ENCODE measurements at regions of chr6 and their contacts with region 1.

Region 1: DNA sequence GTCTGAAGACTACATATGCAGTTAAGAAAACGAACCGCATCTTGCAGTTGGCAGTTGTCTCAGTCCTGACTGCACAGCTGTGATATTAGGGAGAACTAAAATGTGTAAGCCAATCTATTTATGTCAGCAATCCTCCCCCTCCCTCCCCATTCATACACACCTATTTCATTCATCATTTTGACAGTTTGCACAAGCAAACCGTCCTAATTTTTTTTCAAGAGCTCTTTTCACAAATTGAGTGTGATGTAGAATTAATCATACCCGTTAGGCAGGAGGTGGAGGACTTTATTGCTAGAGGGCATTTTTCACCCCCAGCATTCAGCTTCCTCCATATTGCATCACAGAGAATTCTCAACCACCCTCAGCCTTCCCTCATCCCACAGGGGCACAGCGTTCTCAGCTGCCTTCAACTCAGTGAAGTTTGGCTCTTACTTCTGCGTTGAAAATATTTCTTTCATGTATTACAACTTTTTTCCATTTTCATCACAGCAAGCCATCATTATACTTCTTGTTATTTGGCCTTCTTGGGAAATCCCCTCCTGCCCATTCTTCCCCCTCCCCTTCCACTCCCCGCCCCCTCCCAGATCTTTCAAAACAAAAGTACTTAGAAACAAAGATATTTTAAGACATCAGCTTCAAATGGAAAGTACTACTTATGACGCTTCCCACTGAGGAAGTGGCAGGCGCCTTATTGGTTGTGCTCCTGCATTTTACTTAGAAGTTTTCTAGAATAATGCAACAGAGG is 37.5 kb downstream of the NOX3 start:
- DNase-seq: peak; percentile 40
- H3K4me3 Mint-ChIP-seq: peak overlapping the region; percentile 61
- H3K27ac Mint-ChIP-seq: peak overlapping the region; percentile 96
- H3K4me1 Mint-ChIP-seq: peaks cover 45% of the 10 kb centered on the region
- H3K27me3 Mint-ChIP-seq: no peaks in the 10 kb centered on the region

Region 2: GRCh38 chr6:154733012-154733625 is 685.1 kb before region 1 on chr6 and contains the start of gene SCAF8:
- intact Hi-C with region 1: loop called (anchors 5 kb)
- DNase-seq: peak; percentile 83
- H3K4me3 Mint-ChIP-seq: peak within 1 kb of the TSS; percentile 91
- H3K27ac Mint-ChIP-seq: peak within 1 kb of the TSS; percentile 98
- H3K4me1 Mint-ChIP-seq: peaks cover 24% of the 10 kb centered on the region
- H3K27me3 Mint-ChIP-seq: no peaks in the 10 kb centered on the region
- total RNA-seq, gene SCAF8: 35.4 and 37.3 TPM in 2 replicates

Region 3: GRCh38 chr6:155314092-155314772 is 104.0 kb before region 1 on chr6 and contains the start of gene TFB1M:
- intact Hi-C with region 1: loop called (anchors 1 kb)
- DNase-seq: peak; percentile 99
- H3K4me3 Mint-ChIP-seq: peak within 1 kb of the TSS; percentile 96
- H3K27ac Mint-ChIP-seq: peak within 1 kb of the TSS; percentile 93
- H3K4me1 Mint-ChIP-seq: peaks cover 36% of the 10 kb centered on the region
- H3K27me3 Mint-ChIP-seq: no peaks in the 10 kb centered on the region
- total RNA-seq, gene TFB1M: 32.5 and 39.8 TPM in 2 replicates

Region 4: GRCh38 chr6:155444952-155445903 is 27.0 kb after region 1 on chr6:
- intact Hi-C with region 1: loop called (anchors 1 kb)
- DNase-seq: no peak
- H3K4me3 Mint-ChIP-seq: no peak overlapping the region
- H3K27ac Mint-ChIP-seq: no peak overlapping the region
- H3K4me1 Mint-ChIP-seq: peaks cover 16% of the 10 kb centered on the region
- H3K27me3 Mint-ChIP-seq: no peaks in the 10 kb centered on the region

Region 5: GRCh38 chr6:155461556-155461955 is 43.4 kb after region 1 on chr6:
- intact Hi-C with region 1: no loop called
- DNase-seq: no peak
- H3K4me3 Mint-ChIP-seq: no peak overlapping the region
- H3K27ac Mint-ChIP-seq: no peak overlapping the region
- H3K4me1 Mint-ChIP-seq: peaks cover 3% of the 10 kb centered on the region
- H3K27me3 Mint-ChIP-seq: peaks cover 2% of the 10 kb centered on the region

Region 6: GRCh38 chr6:155628306-155628705 is 210.1 kb after region 1 on chr6:
- intact Hi-C with region 1: loop called (anchors 5 kb)
- DNase-seq: no peak
- H3K4me3 Mint-ChIP-seq: no peak overlapping the region
- H3K27ac Mint-ChIP-seq: peak overlapping the region; percentile 88
- H3K4me1 Mint-ChIP-seq: peaks cover 8% of the 10 kb centered on the region
- H3K27me3 Mint-ChIP-seq: no peaks in the 10 kb centered on the region